GM12878 (cell line): ENCODE measurements at regions of chr5 and their contacts with region 1.

Region 1: DNA sequence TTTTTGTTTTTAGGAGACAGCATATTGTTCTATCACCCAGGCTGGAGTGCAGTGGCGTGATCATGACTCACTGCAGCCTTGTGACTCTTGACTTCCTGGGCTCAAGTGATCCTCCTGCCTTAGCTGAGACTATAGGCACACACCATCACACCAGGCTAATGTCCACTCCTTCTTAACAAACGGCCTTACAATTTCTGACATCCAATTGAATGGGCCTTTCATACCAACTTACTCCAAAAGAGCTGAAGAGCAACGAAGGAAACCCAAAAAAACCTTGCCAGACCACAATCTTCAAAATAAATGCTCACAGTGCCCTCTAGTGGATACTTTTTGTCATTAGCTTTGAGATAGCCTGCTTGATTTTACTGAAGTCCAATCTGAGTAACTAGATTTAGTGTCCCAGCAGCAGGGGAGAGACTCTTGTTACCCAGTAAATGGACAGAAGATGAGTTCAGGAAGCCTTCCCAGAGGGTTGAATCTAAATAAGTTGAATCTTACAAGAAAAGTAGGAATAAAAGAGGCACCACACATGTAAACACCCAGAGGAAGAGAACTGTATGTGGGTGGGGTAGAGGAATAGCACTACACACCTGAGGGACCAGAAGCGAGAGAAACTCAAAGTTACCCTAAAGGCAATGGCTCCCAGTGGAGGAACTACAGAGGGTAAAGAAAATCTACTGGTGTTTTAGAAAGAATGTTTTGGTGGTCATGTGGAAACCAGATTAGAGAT is 9.3 kb downstream of the ZNF622 start:
- DNase-seq: no peak
- ATAC-seq: peak; percentile 81
- H3K4me3 ChIP-seq: no peak overlapping the region
- H3K27ac ChIP-seq: no peak overlapping the region
- H3K4me1 ChIP-seq: 0 out of 2 replicates have a peak, but pooled peaks cover 4% of the 10 kb centered on the region
- H3K27me3 ChIP-seq: no peaks in the 10 kb centered on the region
- CTCF ChIP-seq: peak; percentile 38 to 63 (median 59); a peak in 5 of 6 replicates
- EP300 ChIP-seq: no peak
- POLR2A ChIP-seq: no peak
- RAD21 ChIP-seq: peak; percentile 62

Region 2: GRCh38 chr5:16152601-16153568 is 303.4 kb before region 1 on chr5:
- CTCF ChIA-PET with region 1: interaction called, 11 read pairs
- POLR2A ChIA-PET with region 1: no interaction called
- RAD21 ChIA-PET with region 1: no interaction called
- SMC1A ChIA-PET with region 1: interaction called, 4 read pairs
- in situ Hi-C with region 1: no loop called
- intact Hi-C with region 1: no loop called
- DNase-seq: no peak
- ATAC-seq: no peak
- H3K4me3 ChIP-seq: no peak overlapping the region
- H3K27ac ChIP-seq: no peak overlapping the region
- H3K4me1 ChIP-seq: no peaks in the 10 kb centered on the region
- H3K27me3 ChIP-seq: no peaks in the 10 kb centered on the region
- CTCF ChIP-seq: no peak
- EP300 ChIP-seq: no peak
- POLR2A ChIP-seq: no peak
- RAD21 ChIP-seq: no peak

Region 3: GRCh38 chr5:16160706-16161105 is 295.6 kb before region 1 on chr5:
- CTCF ChIA-PET with region 1: interaction called, 117 read pairs
- POLR2A ChIA-PET with region 1: no interaction called
- RAD21 ChIA-PET with region 1: interaction called, 49 read pairs
- SMC1A ChIA-PET with region 1: interaction called, 56 read pairs
- in situ Hi-C with region 1: loop called (anchors 5 kb)
- intact Hi-C with region 1: loop called (anchors 1 kb)
- DNase-seq: peak; percentile 2
- ATAC-seq: peak; percentile 96
- H3K4me3 ChIP-seq: no peak overlapping the region
- H3K27ac ChIP-seq: no peak overlapping the region
- H3K4me1 ChIP-seq: no peaks in the 10 kb centered on the region
- H3K27me3 ChIP-seq: no peaks in the 10 kb centered on the region
- CTCF ChIP-seq: peak; percentile 66 to 70 (median 68)
- EP300 ChIP-seq: no peak
- POLR2A ChIP-seq: no peak
- RAD21 ChIP-seq: peak; percentile 83

Region 4: DNA sequence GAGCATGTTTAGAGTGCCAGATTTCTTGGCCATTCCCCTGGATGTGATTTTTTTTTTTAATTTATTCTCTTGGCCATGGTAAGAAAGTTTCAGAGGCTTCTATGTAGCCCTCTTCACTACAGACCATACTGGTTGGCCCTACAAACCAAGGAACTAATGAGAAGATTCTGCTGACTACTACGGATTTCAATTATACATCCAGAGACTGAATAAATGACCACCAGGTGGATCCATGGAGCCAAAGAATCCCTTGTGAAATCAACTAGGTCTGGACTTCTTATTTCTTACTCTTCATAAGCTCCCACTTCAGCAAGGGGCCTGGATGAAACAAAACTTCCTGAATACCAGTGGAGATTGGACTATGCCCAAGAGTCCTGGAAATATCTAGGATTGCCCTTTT is 18.3 kb before region 1 on chr5:
- CTCF ChIA-PET with region 1: interaction called, 15 read pairs
- POLR2A ChIA-PET with region 1: no interaction called
- RAD21 ChIA-PET with region 1: no interaction called
- SMC1A ChIA-PET with region 1: interaction called, 4 read pairs
- in situ Hi-C with region 1: no loop called
- intact Hi-C with region 1: no loop called
- DNase-seq: no peak
- ATAC-seq: no peak
- H3K4me3 ChIP-seq: no peak overlapping the region
- H3K27ac ChIP-seq: no peak overlapping the region
- H3K4me1 ChIP-seq: no peaks in the 10 kb centered on the region
- H3K27me3 ChIP-seq: no peaks in the 10 kb centered on the region
- CTCF ChIP-seq: no peak
- EP300 ChIP-seq: no peak
- POLR2A ChIP-seq: no peak
- RAD21 ChIP-seq: no peak

Region 5: DNA sequence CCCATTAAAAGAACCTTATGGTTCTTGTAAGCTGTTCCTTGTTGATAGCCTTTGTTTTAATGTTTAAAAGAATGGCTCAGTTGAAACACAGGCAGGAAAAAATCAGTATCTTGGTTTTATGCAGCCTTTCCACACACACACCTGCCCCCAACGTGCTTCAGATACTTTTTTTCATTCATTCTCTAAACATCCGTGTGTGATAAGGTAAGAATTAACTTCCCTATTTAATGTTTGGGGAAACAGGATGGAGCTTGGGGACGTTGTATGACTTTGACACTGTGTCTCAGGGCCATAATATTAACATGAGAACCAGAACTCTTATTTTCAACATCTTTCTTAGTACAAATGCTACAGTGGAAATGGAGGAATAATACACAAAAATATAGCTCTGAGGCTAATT is 15.1 kb after region 1 on chr5:
- CTCF ChIA-PET with region 1: interaction called, 48 read pairs
- POLR2A ChIA-PET with region 1: interaction called, 4 read pairs
- RAD21 ChIA-PET with region 1: interaction called, 4 read pairs
- SMC1A ChIA-PET with region 1: interaction called, 8 read pairs
- in situ Hi-C with region 1: no loop called
- intact Hi-C with region 1: no loop called
- DNase-seq: no peak
- ATAC-seq: no peak
- H3K4me3 ChIP-seq: no peak overlapping the region
- H3K27ac ChIP-seq: no peak overlapping the region
- H3K4me1 ChIP-seq: peaks cover 14% of the 10 kb centered on the region
- H3K27me3 ChIP-seq: no peaks in the 10 kb centered on the region
- CTCF ChIP-seq: no peak
- EP300 ChIP-seq: no peak
- POLR2A ChIP-seq: no peak
- RAD21 ChIP-seq: no peak

Region 6: DNA sequence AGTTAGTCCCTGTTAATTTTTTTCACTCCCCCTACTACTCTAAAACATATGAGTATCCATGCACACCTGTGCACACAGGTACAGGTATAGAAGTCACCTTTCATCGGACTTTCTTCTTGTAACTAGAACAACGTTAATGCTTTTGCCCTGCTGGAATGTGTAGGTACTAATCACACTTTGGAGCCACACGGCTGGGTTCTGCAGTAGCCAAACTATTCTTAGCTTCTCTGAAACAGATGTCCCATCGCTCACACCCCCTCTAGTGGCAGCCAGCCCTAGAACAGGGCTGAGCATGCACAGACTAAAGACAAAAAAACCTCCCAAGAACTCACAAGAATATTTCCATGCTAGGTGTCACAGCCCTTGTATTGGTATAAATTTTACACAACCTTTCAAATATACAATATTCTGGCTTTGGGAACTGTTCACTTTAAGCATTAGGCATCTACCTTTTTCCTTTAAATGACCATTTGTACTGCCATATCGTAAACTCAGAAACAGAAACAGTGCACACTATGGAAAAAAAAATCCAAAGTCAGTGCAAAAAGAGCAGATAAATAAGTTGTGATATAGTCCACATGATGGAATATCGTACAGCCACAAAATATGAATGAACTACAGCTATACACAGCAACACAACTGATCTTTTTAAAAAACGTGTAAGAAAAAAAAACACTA is 96.5 kb after region 1 on chr5:
- CTCF ChIA-PET with region 1: interaction called, 12 read pairs
- POLR2A ChIA-PET with region 1: no interaction called
- RAD21 ChIA-PET with region 1: no interaction called
- SMC1A ChIA-PET with region 1: interaction called, 5 read pairs
- in situ Hi-C with region 1: no loop called
- intact Hi-C with region 1: no loop called
- DNase-seq: no peak
- ATAC-seq: peak; percentile 89
- H3K4me3 ChIP-seq: no peak overlapping the region
- H3K27ac ChIP-seq: no peak overlapping the region
- H3K4me1 ChIP-seq: no peaks in the 10 kb centered on the region
- H3K27me3 ChIP-seq: no peaks in the 10 kb centered on the region
- CTCF ChIP-seq: peak; percentile 67 to 90 (median 81)
- EP300 ChIP-seq: no peak
- POLR2A ChIP-seq: no peak
- RAD21 ChIP-seq: peak; percentile 51